Dorsolateral prefrontal cortex (tissue), 120 donors: ENCODE measurements at regions of chr19 and their contacts with region 1.

Region 1: GRCh38 chr19:47436712-47437401 is 17.5 kb upstream of the MEIS3 start:
- DNase-seq: peak; percentile 68 to 94 (median 84)
- H3K4me3 ChIP-seq: peak overlapping the region in 9 of 59 donors; percentile 1 to 40 (median 24)
- H3K27ac ChIP-seq: peak overlapping the region in 35 of 59 donors; percentile 3 to 83 (median 38)
- H3K27me3 ChIP-seq: peaks cover 0 to 9% (median 0%) of the 10 kb centered on the region in 45 donors
- CTCF ChIP-seq: peak; percentile 34 to 98 (median 92)

Region 2: GRCh38 chr19:47391510-47392223 is 45.2 kb before region 1 on chr19:
- intact Hi-C with region 1: no loop called
- DNase-seq: peak in 9 of 10 donors; percentile 71 to 81 (median 77)
- H3K4me3 ChIP-seq: peak overlapping the region in 11 of 59 donors; percentile 2 to 50 (median 19)
- H3K27ac ChIP-seq: no peak overlapping the region
- H3K27me3 ChIP-seq: no peaks in the 10 kb centered on the region
- CTCF ChIP-seq: peak; percentile 73 to 97 (median 92)

Region 3: DNA sequence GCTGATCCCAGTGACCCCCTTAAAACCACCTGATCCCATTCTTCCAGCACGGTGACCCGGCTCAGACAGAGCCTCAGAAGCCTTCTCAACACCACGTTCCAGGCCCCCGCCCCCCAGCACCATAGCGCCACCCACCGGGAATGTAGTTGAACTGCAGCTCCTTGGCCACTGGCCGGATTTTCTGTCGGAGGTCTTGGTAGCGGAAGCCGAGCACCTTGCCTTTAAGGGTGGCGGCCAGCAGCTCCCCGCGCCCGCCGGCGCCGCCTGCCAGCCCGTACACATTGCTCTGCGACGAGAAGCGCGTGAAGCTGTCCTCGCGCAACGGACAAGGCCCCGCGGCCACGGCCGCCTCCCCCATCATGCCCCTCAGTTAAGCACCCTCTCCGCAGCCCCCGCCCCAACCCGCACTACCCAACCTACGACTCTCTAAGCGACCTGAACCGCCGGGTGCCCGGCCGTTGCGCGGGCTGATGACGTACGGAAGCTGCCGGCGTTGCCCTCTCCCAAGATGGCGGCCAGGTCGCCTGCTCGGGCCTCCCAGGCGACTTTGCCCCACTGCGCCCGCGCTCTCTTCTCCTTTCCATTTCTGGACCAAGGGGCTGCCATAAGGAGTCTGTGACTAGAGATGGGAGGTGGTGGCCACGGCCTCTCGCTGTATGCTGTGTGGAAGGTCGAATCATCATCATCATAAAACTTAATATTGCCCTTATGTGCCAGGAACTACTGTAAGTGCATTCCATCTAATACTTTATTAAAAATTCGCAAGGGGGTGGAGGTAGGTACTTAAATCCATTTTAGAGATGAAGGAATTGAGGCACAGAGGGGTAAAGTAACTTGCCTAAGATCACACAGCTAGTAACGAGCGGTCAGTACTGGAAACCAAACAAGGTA is 47.2 kb after region 1 on chr19 and contains the start of gene KPTN:
- intact Hi-C with region 1: loop called in 1 of 2 experiments (anchors 5 kb)
- DNase-seq: peak; percentile 78 to 90 (median 87)
- H3K4me3 ChIP-seq: peak within 1 kb of the TSS; percentile 37 to 96 (median 76)
- H3K27ac ChIP-seq: peak within 1 kb of the TSS; percentile 68 to 98 (median 94)
- H3K27me3 ChIP-seq: no peaks in the 10 kb centered on the region
- CTCF ChIP-seq: peak; percentile 50 to 93 (median 80)
- total RNA-seq, gene KPTN: 9.5 to 40.3 (median 18.4) TPM

Region 4: DNA sequence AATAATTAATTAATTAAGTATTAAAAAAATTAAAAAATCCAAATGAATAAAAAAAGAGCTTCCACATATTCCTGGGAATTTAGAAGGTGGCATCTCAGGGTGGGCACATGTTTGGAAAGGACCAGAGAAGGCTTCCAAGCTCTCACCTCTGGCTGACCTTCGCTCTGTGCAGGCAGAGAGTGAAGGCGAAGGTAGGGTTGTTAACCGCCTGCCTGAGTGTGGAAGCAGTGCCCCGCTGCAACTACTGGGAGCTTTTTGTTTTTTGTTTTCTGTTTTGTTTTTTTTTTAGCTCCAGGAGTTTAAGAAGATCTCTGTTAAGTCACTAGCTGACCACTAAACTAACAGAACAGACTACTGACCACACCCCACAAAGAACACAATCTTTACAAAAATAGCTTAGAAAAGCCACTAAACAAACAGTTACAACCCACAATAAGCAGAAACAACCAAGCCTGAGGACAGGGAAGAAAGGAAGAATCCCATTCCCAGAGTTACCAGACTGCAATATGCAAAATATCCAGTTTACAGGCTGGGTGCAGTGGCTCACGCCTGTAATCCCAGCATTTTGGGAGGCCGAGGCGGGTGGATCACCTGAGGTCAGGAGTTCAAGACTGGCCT is 124.7 kb after region 1 on chr19:
- intact Hi-C with region 1: no loop called
- DNase-seq: no peak
- H3K4me3 ChIP-seq: no peak overlapping the region
- H3K27ac ChIP-seq: no peak overlapping the region
- H3K27me3 ChIP-seq: no peaks in the 10 kb centered on the region
- CTCF ChIP-seq: no peak

Region 5: DNA sequence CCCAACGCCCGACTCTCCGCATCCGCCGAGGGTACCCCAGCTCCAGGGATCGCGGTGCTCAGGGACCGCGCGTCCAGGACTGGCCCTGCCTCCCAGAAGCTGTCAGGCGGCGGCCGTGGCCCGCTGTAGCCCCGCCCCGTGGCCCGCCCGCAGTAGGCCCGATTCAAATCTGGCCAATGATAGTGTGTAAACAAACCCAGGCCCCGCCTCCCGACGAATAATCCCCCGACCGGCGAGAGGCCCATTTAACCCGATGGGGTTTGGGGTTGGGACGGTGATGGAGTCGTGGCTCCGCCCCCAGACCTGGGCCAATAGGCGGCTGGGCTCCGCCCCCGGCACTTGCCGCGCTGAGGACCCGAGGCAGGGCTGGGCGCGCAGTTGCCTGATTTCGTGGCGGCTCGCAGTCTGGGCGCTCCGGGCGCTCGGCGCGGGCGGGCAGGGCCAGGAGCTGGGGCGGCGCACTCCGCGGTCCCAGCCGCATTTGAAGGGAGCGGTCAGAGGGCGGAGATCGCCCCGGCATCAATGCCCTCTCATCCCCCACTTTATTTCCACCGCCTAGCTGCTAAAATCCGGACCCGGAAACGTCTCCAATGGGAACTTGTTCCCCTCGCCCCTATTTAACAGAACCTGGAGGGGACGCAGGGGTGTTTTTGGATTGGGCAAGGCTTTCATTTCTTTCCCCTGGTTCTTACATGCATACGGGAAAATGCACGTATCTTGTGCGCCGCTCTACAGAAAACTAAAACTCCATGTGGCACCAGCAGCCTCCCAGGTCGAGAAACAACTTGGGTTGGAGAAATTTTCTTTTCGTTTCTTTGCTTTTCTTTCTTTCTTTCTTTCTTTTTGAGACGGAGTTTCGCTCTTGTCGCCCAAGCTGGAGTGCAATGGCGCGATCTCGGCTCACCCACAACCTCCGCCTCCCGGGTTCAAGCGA is 163.7 kb after region 1 on chr19:
- intact Hi-C with region 1: loop called (anchors 5 kb)
- DNase-seq: peak; percentile 98 to 100 (median 100)
- H3K4me3 ChIP-seq: peak overlapping the region; percentile 47 to 89 (median 73)
- H3K27ac ChIP-seq: peak overlapping the region; percentile 41 to 94 (median 83)
- H3K27me3 ChIP-seq: no peaks in the 10 kb centered on the region
- CTCF ChIP-seq: peak in 34 of 56 donors; percentile 4 to 63 (median 28)

Region 6: DNA sequence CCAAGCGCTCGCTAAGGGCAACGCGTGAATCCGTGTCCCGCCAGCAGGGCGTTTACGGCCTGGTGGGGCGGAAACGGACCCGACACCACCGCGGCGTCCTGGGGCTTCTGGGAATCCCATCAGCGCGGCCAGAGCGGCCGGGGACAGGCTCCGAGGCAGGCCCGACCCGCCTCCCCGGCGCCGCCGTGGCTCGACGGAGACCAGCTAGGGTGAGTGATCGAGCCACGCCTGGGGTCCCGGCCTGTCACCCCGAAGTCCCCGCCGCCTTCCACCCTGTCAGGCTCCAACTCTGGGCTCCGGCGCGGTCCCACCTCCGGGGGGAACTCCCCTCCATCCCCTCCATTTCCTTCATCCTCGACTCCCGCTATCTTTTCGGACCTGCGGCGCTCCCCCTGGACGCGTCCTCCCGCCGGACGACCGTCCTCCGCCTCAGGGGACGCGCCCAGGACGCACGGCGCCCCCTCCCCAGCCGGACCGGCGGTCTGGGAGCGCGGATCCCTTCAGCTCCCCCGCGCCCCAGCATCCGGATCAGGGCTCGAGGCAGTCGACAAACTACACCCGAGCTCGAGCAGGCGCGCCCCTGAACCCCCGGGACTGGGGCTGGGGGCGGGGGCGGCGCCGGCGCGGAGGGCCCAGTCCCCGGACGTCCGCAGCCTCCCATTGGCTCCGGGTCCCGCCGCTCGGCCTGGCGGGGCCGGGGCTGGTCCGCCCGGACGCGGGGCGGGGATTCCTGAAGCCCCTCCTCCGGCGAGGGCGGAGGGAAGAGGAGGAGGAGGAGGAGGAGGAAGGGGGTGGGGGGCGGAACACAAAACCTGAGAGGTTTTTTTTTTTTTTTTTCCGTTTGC is 171.4 kb after region 1 on chr19:
- intact Hi-C with region 1: loop called (anchors 5 kb)
- DNase-seq: peak; percentile 76 to 98 (median 91)
- H3K4me3 ChIP-seq: peak overlapping the region; percentile 73 to 100 (median 98)
- H3K27ac ChIP-seq: peak overlapping the region; percentile 77 to 99 (median 95)
- H3K27me3 ChIP-seq: no peaks in the 10 kb centered on the region
- CTCF ChIP-seq: peak in 12 of 56 donors; percentile 1 to 20 (median 14)

Region 7: DNA sequence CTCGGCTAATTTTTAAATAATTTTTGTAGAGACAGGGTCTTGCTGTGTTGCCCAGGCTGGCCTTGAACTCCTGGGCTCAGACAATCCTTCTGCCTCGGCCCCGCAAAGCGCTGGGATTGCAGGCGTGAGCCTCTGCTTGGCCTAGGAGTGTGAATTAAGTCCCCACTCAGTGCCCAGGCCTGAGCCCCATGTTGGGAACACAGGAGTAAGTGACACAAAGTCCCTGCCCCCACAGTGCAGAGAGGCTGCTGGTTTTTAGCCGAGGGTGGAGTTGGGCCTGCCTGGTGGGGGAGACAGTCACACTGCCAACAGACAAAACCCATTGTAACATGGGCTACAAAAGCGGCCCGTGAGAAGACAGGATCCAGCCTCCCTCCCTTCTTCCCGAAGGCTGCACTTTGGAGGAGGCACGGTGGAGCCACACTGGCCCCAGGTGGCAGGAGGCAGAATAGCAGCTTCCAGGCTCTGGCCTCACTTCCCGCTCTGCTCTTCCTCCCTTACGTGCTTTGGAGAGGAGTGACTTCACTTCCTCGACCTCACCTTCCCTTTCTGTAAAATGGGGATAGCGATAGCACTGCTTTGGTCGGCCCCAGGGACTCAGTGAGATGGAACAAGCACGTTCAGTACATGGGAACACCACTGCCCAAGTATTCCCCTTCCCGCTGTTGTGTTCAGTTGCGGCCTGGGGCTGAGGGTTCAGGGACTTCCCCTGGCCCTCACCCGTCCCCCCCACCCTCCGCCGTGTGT is 261.2 kb after region 1 on chr19:
- intact Hi-C with region 1: loop called (anchors 2 kb)
- DNase-seq: peak; percentile 74 to 89 (median 86)
- H3K4me3 ChIP-seq: peak overlapping the region in 5 of 59 donors; percentile 3 to 30 (median 11)
- H3K27ac ChIP-seq: peak overlapping the region in 58 of 59 donors; percentile 11 to 95 (median 85)
- H3K27me3 ChIP-seq: no peaks in the 10 kb centered on the region
- CTCF ChIP-seq: peak; percentile 80 to 99 (median 97)

Region 8: DNA sequence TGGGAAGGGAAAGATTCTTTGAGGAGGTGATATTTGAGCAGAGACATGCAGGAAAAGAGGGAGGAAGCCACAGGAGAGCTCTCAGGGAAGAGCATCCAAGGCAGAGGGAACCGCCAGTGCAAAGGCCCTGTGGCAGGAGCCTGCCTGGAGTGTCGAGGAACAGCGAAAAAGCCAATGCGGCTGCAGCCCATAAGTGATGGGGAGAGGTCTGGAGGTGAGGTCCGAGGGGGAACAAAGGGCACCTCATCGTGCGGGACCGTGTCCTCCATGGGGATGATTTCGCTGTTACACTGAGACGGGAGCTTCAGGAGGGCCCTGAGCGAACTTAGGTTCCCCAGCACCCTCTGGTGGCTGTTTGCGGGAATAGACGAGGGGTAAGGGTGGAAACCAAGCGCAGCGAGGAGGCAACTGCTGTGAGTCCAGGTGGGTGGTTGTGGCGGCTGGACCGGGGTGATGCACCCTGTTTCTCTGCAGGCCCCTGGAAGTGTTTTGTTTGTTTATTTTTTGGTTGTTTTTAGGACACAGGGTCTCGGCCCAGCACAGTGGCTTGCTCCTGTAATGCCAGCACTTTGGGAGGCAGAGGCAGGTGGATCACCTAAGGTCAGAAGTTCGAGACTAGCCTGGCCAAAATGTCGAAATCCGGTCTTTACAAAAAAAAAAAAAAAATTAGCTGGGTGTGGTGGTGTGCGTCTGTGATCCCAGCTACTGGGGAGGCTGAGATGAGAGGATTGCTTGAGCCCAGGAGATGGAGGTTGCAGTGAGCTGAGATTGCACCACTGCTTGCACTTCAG is 270.5 kb after region 1 on chr19:
- intact Hi-C with region 1: loop called in 1 of 2 experiments (anchors 1 kb)
- DNase-seq: peak; percentile 56 to 79 (median 68)
- H3K4me3 ChIP-seq: peak overlapping the region in 7 of 59 donors; percentile 2 to 28 (median 21)
- H3K27ac ChIP-seq: peak overlapping the region in 1 of 59 donors; percentile 53
- H3K27me3 ChIP-seq: peaks cover 0 to 2% (median 0%) of the 10 kb centered on the region in 45 donors
- CTCF ChIP-seq: peak; percentile 51 to 92 (median 80)